GM18951 (cell line): ENCODE measurements at regions of chr12 and their contacts with region 1.

Region 1: DNA sequence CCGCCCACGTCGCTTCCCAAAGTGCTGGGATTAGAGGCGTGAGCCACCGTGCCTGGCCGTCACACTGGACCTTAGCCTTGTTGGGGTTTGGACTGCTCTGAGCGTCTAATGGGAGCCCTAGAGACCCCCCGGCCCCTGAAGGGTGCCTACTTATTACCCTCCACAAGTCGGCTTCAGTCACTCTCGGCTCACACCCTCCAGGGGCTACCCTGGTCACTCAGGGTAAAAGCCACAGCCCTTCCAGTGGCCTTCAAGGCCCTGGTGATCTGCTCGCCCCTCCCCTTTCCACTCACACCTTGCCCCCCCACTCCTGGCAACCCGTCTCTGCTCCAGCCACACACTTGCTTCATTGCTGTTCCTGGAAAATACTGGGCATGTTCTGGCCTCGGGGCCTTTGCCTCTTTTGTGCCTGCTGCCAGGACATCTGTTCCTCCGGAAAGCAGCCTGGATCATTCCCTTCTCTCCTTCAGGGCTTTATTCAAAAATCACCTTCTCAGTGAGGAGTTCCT is 3.6 kb upstream of the MORN3 start:
- POLR2A ChIP-seq: no peak

Region 2: DNA sequence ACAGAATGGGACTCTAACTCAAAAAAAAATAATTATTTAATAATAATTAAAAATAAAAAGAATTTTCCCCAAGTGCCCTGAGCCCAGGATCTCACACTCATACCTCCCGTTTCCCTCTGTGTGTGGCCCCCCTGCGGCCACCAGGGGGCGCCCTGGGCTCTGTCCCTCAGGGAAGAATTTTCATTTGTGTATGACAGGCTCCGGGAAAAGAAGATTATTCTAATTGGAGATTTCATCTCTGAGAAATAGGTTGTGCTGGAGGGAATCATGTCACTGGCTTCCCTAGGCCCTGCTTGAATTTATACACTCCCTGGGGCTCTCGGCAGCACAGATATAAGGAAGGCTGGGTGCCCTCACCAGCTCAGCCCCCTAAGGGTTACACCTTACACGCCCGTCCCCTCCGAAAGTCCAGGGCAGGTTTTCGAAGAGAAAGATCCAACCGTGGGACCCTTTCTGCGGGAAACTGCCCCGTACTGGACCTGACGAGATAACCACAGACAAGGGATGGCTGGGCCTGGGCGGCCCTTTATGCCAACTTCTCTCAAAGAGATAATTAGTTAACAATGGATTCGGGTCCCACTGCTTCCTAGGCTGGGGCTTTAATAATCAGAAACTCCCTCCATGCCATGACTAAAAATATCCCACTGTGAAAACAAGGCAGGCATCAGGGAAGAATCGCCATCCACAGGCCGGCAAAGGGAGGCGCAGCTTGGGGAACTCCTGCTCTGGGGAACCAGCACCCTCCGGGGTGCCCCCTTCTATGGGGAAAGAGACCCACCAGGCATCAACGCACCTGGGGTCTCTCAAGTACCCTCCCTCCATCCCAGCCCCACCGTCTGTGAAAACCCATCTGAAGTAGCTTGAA is 172.9 kb before region 1 on chr12:
- in situ Hi-C with region 1: loop called (anchors 10 kb)
- POLR2A ChIP-seq: no peak